ENCODE measurements at regions of chr11 and their contacts with region 1.

Region 1: GRCh38 chr11:15688351-15688792 is 573.6 kb downstream of the INSC start:
- DNase-seq: no peak
- H3K4me3 ChIP-seq: no peak overlapping the region
- H3K27ac ChIP-seq: no peak overlapping the region
- H3K4me1 ChIP-seq: no peaks in the 10 kb centered on the region
- H3K27me3 ChIP-seq: no peaks in the 10 kb centered on the region
- CTCF ChIP-seq: no peak
- POLR2A ChIP-seq: no peak

Region 2: GRCh38 chr11:15519124-15519791 is 169.1 kb before region 1 on chr11:
- intact Hi-C with region 1: no loop called
- DNase-seq: no peak
- H3K4me3 ChIP-seq: no peak overlapping the region
- H3K27ac ChIP-seq: no peak overlapping the region
- H3K4me1 ChIP-seq: no peaks in the 10 kb centered on the region
- H3K27me3 ChIP-seq: no peaks in the 10 kb centered on the region
- CTCF ChIP-seq: no peak
- POLR2A ChIP-seq: no peak

Region 3: GRCh38 chr11:15602785-15603567 is 85.4 kb before region 1 on chr11:
- intact Hi-C with region 1: loop called (anchors 10 kb)
- DNase-seq: no peak
- H3K4me3 ChIP-seq: no peak overlapping the region
- H3K27ac ChIP-seq: no peak overlapping the region
- H3K4me1 ChIP-seq: no peaks in the 10 kb centered on the region
- H3K27me3 ChIP-seq: no peaks in the 10 kb centered on the region
- CTCF ChIP-seq: no peak
- POLR2A ChIP-seq: no peak

Region 4: DNA sequence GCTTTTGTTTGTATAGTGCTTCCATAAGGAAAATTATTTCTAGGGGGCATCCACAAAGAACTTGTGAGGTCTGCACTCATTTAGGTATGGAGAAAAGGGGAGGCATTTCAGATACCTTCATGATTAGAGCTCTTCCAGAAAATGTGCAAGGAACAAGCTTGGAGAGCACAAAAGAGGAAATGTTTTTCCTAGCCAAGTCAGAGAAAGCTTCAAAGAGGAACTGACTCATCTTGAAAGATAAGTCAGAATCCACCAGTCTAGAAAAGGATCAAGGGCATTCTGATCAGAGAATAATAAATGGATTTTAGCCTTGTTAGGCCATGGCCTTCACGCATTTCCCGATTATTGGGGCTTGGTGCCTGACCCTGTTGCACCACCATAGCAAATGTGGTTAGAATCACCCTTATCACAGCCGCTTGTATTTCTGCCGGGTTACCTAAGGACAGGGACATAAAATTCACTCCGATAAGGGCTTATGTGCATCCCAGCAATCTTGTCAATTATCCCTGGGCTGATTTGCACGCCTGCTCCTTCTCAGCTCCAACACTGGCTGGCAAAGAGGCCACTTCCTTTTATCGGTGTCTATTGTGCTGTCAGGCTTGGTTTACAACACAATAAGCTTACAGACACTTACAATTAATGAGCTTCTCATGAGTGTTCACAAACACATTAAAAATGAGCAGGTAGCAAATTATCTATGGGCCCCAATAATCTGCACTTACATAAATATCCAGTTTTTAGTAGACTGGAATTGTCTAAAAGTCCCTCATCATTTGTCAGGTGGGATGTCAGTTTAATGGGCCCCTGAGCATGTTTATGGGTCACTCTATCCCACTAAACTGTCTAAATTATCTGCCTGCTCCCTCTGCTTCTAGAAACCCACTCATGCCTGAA is 54.5 kb after region 1 on chr11:
- intact Hi-C with region 1: loop called (anchors 10 kb)
- DNase-seq: no peak
- H3K4me3 ChIP-seq: no peak overlapping the region
- H3K27ac ChIP-seq: peak overlapping the region in 4 of 8 donors; percentile 16 to 45 (median 24)
- H3K4me1 ChIP-seq: peaks cover 0 to 7% (median 1%) of the 10 kb centered on the region in 6 donors
- H3K27me3 ChIP-seq: no peaks in the 10 kb centered on the region
- CTCF ChIP-seq: no peak
- POLR2A ChIP-seq: no peak

Region 5: DNA sequence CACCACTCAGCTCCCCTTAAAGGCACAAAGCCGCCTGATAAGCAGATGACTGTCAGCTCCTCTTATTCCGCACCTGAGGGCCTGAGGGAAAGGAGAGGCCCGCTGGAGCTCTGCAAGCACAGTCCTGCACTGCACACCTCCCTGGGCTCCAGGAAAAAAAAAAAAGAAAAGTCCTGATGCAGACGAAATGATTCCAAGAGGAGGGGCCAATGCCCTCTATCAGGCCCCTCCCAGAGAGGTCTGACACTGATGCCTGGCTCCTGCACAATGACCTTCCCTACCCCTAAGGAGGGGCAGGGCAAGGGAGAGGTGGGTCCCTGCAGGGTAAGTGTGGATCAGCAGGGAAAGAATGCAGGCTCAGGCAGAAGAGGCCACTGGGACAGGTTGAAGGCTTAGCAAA is 95.2 kb after region 1 on chr11:
- intact Hi-C with region 1: no loop called
- DNase-seq: no peak
- H3K4me3 ChIP-seq: no peak overlapping the region
- H3K27ac ChIP-seq: no peak overlapping the region
- H3K4me1 ChIP-seq: no peaks in the 10 kb centered on the region
- H3K27me3 ChIP-seq: no peaks in the 10 kb centered on the region
- CTCF ChIP-seq: no peak
- POLR2A ChIP-seq: no peak